ENCODE measurements at regions of chr21 and their contacts with region 1.

Region 1: GRCh38 chr21:32403201-32403777 is 9.2 kb upstream of the EVA1C start:
- DNase-seq: peak; percentile 58
- ATAC-seq: peak; percentile 97
- H3K4me3 Mint-ChIP-seq: no peak overlapping the region
- H3K27ac Mint-ChIP-seq: no peak overlapping the region; the same call in 1 of the 2 replicates
- H3K4me1 Mint-ChIP-seq: peaks cover 13% of the 10 kb centered on the region
- H3K27me3 Mint-ChIP-seq: peaks cover 7% of the 10 kb centered on the region
- CTCF ChIP-seq: peak; percentile 59; the same call in 1 of the 2 replicates

Region 2: GRCh38 chr21:32114419-32115035 is 288.8 kb before region 1 on chr21:
- CTCF ChIA-PET with region 1: no interaction called
- POLR2A ChIA-PET with region 1: no interaction called
- DNase-seq: no peak
- ATAC-seq: no peak
- H3K4me3 Mint-ChIP-seq: no peak overlapping the region
- H3K27ac Mint-ChIP-seq: no peak overlapping the region
- H3K4me1 Mint-ChIP-seq: no peaks in the 10 kb centered on the region
- H3K27me3 Mint-ChIP-seq: no peaks in the 10 kb centered on the region; the same call in 1 of the 2 replicates
- CTCF ChIP-seq: no peak

Region 3: GRCh38 chr21:32392880-32393676 is 10.2 kb before region 1 on chr21 and contains the start of gene URB1:
- CTCF ChIA-PET with region 1: interaction called, 14 read pairs
- POLR2A ChIA-PET with region 1: no interaction called
- DNase-seq: peak; percentile 93
- ATAC-seq: peak; percentile 95
- H3K4me3 Mint-ChIP-seq: peak within 1 kb of the TSS; percentile 89
- H3K27ac Mint-ChIP-seq: no peak within 1 kb of the TSS; the same call in 1 of the 2 replicates
- H3K4me1 Mint-ChIP-seq: peaks cover 35% of the 10 kb centered on the region
- H3K27me3 Mint-ChIP-seq: peaks cover 29% of the 10 kb centered on the region
- CTCF ChIP-seq: no peak
- total RNA-seq, gene URB1: 28.0 to 38.7 TPM (median 29.5 TPM) in 3 replicates

Region 4: GRCh38 chr21:32562426-32562825 is 159.1 kb after region 1 on chr21:
- CTCF ChIA-PET with region 1: interaction called, 66 read pairs
- POLR2A ChIA-PET with region 1: no interaction called
- DNase-seq: peak; percentile 39
- ATAC-seq: peak; percentile 63
- H3K4me3 Mint-ChIP-seq: no peak overlapping the region
- H3K27ac Mint-ChIP-seq: peak overlapping the region; percentile 94
- H3K4me1 Mint-ChIP-seq: peaks cover 49% of the 10 kb centered on the region
- H3K27me3 Mint-ChIP-seq: no peaks in the 10 kb centered on the region
- CTCF ChIP-seq: no peak

Region 5: DNA sequence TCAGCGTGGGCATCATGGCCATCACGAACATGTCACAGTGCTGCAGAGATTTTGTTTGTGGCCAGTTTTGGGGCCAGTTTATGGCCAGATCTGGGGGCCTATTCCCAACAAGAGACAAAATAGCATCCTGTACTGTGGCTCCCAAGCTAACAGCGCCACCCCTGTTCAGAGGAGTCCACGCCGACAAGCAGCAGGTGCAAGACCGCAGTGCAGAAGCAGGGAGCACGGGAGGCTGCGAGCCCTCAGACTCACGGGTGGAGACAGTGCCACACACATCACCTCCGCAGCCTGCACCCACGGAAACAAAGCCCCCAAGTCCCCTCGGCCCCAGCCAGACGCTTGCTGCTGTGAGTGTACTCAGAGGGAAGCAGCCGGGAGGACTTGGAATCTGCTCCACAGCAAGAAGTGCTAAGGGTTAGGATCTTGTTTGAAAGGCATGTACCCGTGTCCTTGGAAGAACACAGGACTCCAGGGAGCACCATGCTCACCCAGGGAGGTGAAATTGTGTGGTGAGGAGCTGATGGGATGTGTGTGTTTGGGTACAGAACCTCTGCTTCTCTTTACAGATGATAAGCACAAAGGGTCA is 174.9 kb after region 1 on chr21:
- CTCF ChIA-PET with region 1: interaction called, 66 read pairs
- POLR2A ChIA-PET with region 1: interaction called, 4 read pairs
- DNase-seq: peak; percentile 72
- ATAC-seq: peak; percentile 94
- H3K4me3 Mint-ChIP-seq: no peak overlapping the region
- H3K27ac Mint-ChIP-seq: no peak overlapping the region
- H3K4me1 Mint-ChIP-seq: peaks cover 8% of the 10 kb centered on the region
- H3K27me3 Mint-ChIP-seq: no peaks in the 10 kb centered on the region
- CTCF ChIP-seq: peak; percentile 52; the same call in 1 of the 2 replicates

Region 6: DNA sequence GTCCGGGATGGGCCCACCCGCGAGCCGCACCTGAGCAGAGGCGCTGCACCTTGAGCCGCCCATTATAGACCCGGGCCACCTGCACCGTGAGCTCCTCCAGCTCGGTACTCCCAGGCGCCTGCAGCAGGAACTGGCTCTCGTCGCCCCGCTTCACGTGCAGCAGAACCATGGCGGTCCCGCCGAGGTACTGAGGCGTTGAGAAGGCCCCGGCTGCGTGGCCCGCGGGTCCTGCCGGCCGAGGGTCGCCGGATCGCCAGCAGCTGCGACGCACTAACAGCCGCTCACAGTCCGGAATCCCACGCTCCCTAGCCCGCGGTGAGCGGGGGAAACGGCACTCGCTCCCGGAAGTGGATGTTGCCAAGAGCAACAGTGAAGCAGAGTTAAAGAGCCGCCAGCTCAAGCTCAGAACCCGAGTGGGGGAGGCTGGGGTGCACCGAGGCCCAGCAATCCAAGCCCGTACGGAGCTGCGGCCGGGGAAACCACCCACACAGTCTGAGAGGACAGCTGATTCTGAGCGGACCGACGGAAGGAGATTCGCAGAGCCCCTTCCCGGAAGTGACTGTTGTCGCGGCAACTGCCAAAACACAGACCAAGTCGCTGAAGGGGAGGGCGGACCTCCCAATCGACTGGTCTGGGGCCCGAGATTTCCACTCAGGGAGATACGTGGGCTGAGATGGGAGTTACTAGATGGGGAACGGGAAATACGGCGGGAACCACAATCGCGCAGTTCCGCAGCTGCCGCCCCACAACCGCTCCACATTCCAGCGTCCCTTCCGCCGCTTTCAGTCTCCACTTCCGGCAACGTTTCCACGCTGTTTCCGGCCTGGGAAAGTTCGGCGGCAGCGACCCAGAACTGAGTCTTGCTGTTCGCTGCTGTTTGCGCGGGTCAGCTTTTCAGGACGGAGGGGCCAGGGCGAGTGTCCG is 209.0 kb after region 1 on chr21 and contains the start of gene CFAP298:
- CTCF ChIA-PET with region 1: interaction called, 11 read pairs
- POLR2A ChIA-PET with region 1: no interaction called
- DNase-seq: peak; percentile 80
- ATAC-seq: peak; percentile 89
- H3K4me3 Mint-ChIP-seq: peak within 1 kb of the TSS; percentile 95
- H3K27ac Mint-ChIP-seq: peak within 1 kb of the TSS; percentile 93
- H3K4me1 Mint-ChIP-seq: peaks cover 14% of the 10 kb centered on the region
- H3K27me3 Mint-ChIP-seq: peaks cover 2% of the 10 kb centered on the region
- CTCF ChIP-seq: no peak
- total RNA-seq, gene CFAP298: 80.3 to 98.1 TPM (median 85.1 TPM) in 3 replicates